Activated naive CD4-positive, alpha-beta T cell treated with anti-CD3 and anti-CD28 coated beads for 36 hours (primary cell): ENCODE measurements at regions of chr4 and their contacts with region 1.

Region 1: GRCh38 chr4:105215609-105216313 is 69.1 kb downstream of the TET2 start:
- DNase-seq: no peak
- H3K4me3 Mint-ChIP-seq: peak overlapping the region; percentile 2
- H3K27ac Mint-ChIP-seq: peak overlapping the region; percentile 85
- H3K4me1 Mint-ChIP-seq: peaks cover 46% of the 10 kb centered on the region
- H3K27me3 Mint-ChIP-seq: no peaks in the 10 kb centered on the region

Region 2: GRCh38 chr4:104942990-104943743 is 272.6 kb before region 1 on chr4:
- CTCF ChIA-PET with region 1: no interaction called
- intact Hi-C with region 1: no loop called
- DNase-seq: no peak
- H3K4me3 Mint-ChIP-seq: no peak overlapping the region
- H3K27ac Mint-ChIP-seq: no peak overlapping the region
- H3K4me1 Mint-ChIP-seq: peaks cover 5% of the 10 kb centered on the region
- H3K27me3 Mint-ChIP-seq: no peaks in the 10 kb centered on the region

Region 3: DNA sequence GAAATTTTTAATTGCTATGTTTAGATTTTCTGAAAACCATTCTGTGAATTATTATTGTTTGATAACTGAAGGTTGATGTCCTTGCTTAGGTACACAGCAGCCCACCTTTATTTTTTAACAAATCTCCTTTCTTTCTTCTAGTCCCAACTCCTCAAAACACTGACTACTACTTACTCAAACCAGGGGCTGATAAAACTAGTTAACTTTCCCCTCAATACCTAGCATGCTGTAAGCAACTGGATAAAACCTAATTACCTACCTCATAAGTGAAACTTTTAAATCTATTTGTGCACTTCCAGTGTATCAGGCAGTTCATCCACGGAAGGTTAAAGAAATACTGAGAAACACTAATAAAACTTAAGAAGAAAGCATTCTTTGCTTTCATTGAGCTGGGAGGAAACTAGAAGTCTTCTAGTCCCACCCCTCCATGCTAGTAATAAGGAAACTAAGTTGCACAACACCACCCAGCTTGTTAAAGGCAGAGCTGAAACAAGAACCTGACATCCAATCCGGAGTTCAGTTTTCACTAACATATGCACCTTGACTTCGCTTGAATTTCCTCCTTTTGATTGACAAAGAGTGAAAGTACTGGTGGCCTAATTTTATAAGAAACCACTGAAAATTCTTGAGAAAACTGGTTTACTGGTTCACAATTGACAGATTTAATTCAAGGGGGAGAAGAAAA is 249.3 kb before region 1 on chr4:
- CTCF ChIA-PET with region 1: no interaction called
- intact Hi-C with region 1: loop called (anchors 1 kb)
- DNase-seq: peak; percentile 73
- H3K4me3 Mint-ChIP-seq: no peak overlapping the region
- H3K27ac Mint-ChIP-seq: peak overlapping the region; percentile 82
- H3K4me1 Mint-ChIP-seq: peaks cover 12% of the 10 kb centered on the region
- H3K27me3 Mint-ChIP-seq: peaks cover 12% of the 10 kb centered on the region

Region 4: DNA sequence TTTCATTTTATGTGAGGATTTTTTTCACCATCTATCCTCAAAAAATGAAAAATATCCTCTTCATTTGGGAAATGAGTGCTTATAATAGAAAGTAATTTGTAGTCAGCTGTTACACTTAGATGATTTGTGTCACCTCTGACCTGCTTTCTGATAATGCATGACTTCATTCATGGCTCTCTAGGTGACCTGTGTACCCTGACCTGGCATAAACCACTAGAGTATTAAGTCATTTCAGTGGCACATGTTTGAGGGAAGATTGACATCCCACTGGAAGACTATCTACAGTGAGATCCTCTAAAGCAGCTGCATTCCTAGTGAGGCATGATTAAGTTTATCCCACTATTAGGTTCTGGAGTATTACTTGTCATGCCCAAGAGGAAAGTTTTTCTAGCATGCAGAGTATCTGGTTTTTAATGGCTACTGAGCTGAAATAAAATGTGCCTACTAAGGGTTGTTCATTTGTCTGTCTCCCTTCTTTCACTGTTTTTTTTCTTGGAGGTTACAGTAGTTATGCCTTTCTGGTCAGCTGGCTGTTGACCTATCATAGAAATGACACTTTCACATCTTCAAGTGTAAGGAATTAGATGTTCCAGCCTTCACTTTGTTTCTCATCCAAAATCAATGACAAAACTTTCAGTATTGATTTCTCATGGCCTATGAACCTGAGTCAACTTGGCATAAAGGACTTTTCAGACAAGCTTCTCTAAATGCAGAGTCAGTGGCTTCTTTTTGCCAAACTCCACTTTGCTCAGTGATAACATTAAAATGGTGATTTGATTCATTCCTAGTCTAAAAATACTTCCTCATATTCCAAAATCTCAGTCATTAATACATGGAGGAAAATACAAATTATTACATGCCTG is 36.0 kb before region 1 on chr4:
- CTCF ChIA-PET with region 1: no interaction called
- intact Hi-C with region 1: loop called (anchors 5 kb)
- DNase-seq: no peak
- H3K4me3 Mint-ChIP-seq: no peak overlapping the region
- H3K27ac Mint-ChIP-seq: no peak overlapping the region
- H3K4me1 Mint-ChIP-seq: peaks cover 51% of the 10 kb centered on the region
- H3K27me3 Mint-ChIP-seq: no peaks in the 10 kb centered on the region

Region 5: DNA sequence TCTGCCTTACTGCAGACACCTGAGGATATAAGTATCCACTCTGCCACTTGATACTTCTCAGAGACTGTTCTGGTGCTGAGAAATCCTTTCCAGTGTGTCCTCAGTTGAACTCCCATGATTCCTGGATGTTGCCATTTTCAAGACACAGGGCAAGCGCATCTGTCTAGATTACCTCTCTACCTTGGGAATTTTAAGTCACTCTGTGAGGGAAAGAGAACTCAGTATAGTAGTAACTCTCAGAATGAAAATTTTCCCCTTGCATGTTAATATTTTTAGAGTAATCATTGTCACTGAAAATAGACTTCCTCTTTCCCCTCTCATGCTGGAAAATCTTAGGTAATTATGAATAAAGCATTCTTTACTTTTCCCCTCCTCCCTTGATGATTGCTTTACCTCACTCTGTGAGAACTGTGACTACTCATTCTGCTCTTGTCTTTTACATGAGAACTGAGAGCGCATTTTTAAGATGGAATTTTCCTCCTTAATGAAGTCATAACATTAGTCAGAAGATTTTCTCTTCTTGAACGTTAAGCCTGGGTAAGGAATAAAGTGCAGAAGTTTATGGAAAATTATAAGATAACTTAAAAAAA is 24.0 kb before region 1 on chr4:
- CTCF ChIA-PET with region 1: no interaction called
- intact Hi-C with region 1: loop called (anchors 1 kb)
- DNase-seq: no peak
- H3K4me3 Mint-ChIP-seq: no peak overlapping the region
- H3K27ac Mint-ChIP-seq: peak overlapping the region; percentile 87
- H3K4me1 Mint-ChIP-seq: peaks cover 85% of the 10 kb centered on the region
- H3K27me3 Mint-ChIP-seq: no peaks in the 10 kb centered on the region

Region 6: GRCh38 chr4:105274504-105274903 is 58.7 kb after region 1 on chr4:
- CTCF ChIA-PET with region 1: no interaction called
- intact Hi-C with region 1: loop called (anchors 1 kb)
- DNase-seq: no peak
- H3K4me3 Mint-ChIP-seq: no peak overlapping the region
- H3K27ac Mint-ChIP-seq: peak overlapping the region; percentile 64
- H3K4me1 Mint-ChIP-seq: peaks cover 43% of the 10 kb centered on the region
- H3K27me3 Mint-ChIP-seq: no peaks in the 10 kb centered on the region

Region 7: GRCh38 chr4:105318486-105318885 is 102.7 kb after region 1 on chr4:
- CTCF ChIA-PET with region 1: no interaction called
- intact Hi-C with region 1: no loop called
- DNase-seq: no peak
- H3K4me3 Mint-ChIP-seq: no peak overlapping the region
- H3K27ac Mint-ChIP-seq: no peak overlapping the region
- H3K4me1 Mint-ChIP-seq: no peaks in the 10 kb centered on the region
- H3K27me3 Mint-ChIP-seq: no peaks in the 10 kb centered on the region